ENCODE measurements at regions of chr1 and their contacts with region 1.

Region 1: DNA sequence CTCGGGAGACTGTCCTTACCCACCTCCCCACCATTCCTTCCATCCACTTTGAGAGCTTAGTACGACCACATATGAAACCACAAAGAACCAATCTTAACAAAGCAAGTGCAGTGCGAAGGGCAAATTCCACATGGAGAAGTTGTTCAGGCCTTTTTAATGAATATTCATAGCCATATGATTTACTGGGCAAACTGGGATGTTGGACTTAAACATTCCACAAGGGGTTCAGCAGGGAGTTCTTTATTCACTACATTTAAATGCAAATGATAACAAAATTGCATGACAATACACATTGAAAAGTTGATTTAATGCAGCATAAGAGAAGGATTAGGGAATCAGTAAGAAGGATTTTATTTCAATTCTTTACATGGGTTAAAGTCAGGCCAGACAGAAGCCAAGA is 14.7 kb downstream of the NMNAT2 start:
- DNase-seq: peak; percentile 78
- H3K4me3 ChIP-seq: no peak overlapping the region
- H3K27ac ChIP-seq: no peak overlapping the region
- H3K4me1 ChIP-seq: peaks cover 5% of the 10 kb centered on the region
- H3K27me3 ChIP-seq: peaks cover 42% of the 10 kb centered on the region
- CTCF ChIP-seq: no peak

Region 2: DNA sequence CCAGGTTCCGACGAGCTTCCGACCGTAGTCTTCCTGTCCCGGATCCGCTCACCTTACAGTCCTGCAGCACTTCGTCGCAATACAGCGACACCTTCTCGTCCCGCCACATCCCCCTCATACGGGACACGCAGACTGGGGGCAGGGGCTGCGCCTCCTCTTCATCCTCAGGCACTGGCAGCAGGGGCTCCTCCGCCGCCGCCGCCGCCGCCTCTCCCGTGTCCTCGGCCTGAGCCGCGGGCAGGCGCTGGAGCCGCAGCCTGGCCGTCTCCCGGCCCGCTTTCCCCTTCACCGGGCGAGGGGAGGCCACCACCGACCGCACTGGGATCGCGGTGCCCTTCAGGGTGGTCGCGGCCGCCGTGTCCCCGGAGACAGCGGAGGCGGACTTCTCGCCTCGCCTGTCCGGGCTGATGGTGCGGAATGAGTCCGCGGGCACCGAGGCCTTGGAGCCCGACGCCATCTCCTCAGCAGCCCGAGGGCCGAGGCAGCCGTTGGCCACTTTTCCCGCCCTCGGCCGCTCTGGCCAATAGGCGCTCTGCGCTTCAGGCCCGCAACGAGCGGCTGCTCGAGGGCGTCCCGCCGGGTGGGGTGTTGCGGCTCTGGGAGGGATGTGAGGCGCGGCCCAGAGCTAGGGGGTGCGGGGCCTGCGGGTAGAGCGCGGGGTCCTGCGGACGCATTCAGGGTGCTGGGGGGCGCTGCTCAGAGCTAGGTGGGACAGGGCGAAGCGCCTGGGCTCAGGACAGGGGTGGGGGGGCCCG is 450.6 kb before region 1 on chr1 and contains the start of gene SHCBP1L:
- CTCF ChIA-PET with region 1: no interaction called
- POLR2A ChIA-PET with region 1: interaction called, 12 read pairs
- intact Hi-C with region 1: no loop called
- DNase-seq: no peak
- H3K4me3 ChIP-seq: no peak within 1 kb of the TSS
- H3K27ac ChIP-seq: no peak within 1 kb of the TSS
- H3K4me1 ChIP-seq: no peaks in the 10 kb centered on the region
- H3K27me3 ChIP-seq: no peaks in the 10 kb centered on the region
- CTCF ChIP-seq: no peak
- total RNA-seq, gene SHCBP1L: not detected in 2 replicates

Region 3: DNA sequence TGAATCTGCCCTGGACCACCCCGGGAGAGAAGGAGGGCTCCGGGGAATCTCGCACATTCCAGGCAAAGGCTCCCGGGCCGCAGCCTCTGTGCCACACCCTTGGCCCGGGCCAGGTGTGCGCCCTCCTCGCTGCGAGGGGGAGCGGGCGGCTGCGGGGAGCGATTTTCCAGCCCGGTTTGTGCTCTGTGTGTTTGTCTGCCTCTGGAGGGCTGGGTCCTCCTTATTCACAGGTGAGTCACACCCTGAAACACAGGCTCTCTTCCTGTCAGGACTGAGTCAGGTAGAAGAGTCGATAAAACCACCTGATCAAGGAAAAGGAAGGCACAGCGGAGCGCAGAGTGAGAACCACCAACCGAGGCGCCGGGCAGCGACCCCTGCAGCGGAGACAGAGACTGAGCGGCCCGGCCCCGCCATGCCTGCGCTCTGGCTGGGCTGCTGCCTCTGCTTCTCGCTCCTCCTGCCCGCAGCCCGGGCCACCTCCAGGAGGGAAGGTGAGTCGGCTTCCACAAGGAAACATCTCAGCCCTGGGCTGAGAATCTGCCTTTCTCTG is 217.5 kb before region 1 on chr1 and contains the start of gene LAMC2:
- CTCF ChIA-PET with region 1: no interaction called
- POLR2A ChIA-PET with region 1: no interaction called
- intact Hi-C with region 1: no loop called
- DNase-seq: no peak
- H3K4me3 ChIP-seq: no peak within 1 kb of the TSS
- H3K27ac ChIP-seq: no peak within 1 kb of the TSS
- H3K4me1 ChIP-seq: peaks cover 2% of the 10 kb centered on the region
- H3K27me3 ChIP-seq: no peaks in the 10 kb centered on the region
- CTCF ChIP-seq: no peak
- total RNA-seq, gene LAMC2: 0.11 and 0.26 TPM in 2 replicates

Measured in A673 (cell line).